Activated CD4-positive, alpha-beta T cell treated with anti-CD3 and anti-CD28 coated beads for 36 hours (primary cell): ENCODE measurements at regions of chr6 and their contacts with region 1.

Region 1: DNA sequence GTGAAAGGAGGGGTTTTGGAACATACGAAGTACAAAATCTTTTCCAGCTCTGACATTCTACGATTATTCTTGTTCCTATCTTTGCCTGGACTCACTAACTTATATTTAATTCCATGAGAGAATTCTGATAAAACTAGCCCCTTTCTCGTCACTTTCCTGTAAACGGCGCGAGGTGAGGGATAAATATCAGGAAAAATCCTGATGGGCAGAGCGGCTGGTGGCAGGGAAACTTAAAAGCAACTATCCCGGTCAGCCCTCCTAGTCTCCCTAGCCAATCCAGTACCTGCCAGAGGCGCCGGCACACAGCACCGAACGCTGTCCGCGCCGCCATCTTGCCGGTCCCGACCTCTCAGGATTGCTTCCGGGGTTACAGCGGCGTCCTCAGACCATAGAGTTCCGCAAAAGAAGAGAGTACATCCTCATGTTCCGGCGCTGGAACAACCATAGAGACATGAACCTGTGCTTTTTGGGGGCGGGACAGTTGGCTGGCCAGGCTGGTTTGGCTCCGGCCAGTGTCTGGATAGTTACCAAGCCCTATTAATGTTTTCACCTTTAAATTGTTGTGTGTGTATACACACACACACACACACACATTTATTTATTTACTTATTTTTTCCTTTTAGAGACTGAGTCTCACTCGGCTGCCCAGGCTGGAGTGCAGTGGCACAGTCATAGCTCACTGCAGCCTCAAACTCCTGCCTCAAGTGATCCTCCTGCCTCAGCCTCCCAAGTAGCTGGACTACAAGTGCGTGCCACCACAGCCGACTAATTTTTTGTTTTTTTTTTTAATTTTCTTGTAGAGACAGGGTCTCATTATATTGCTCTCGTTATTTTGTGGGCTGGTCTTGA is at the start of gene MRPS10:
- DNase-seq: peak; percentile 95
- ATAC-seq: peak; percentile 99
- H3K4me3 Mint-ChIP-seq: peak within 1 kb of the TSS; percentile 100
- H3K27ac Mint-ChIP-seq: peak within 1 kb of the TSS; percentile 95
- H3K4me1 Mint-ChIP-seq: peaks cover 32% of the 10 kb centered on the region
- H3K27me3 Mint-ChIP-seq: no peaks in the 10 kb centered on the region
- total RNA-seq, gene MRPS10: 35.2 to 36.2 TPM

Region 2: DNA sequence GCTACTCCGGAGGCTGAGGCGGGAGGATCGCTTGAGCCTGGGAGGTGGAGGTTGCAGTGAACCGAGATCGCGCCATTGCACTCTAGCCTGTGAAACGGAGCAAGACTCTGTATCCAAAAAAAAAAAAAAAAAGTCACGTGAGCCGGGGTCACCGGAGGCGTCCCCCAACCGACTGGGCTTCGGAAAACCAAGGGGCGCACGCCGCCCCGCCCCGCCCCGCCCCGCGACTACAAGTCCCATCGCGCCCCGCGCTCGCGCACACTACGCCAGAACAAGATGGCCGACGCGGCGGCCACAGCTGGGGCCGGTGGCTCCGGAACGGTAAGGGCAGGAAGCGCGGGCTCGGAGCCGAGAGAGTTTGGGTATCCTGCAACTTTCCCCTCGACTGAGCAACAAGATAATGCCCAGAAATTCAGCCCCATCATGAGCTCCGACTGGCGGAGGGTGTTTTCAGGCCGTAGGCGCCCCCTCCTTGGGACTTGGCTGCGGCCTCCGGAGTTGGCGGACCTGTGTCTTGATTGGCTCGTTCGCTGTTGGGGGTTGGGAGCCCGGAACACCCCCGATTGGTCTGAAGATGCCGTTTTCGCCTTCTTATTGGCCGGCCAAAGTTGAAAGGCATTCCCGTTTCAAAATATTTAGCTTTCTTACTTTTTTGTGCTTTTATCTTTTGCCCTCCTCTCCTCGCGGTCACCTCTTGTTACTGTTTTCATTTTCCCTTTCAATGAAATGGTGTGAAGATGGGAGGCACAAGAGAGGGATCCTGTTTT is 167.3 kb before region 1 on chr6 and contains the start of gene TAF8:
- CTCF ChIA-PET with region 1: interaction called, 6 read pairs
- POLR2A ChIA-PET with region 1: no interaction called
- intact Hi-C with region 1: loop called in 1 of 2 experiments (anchors 1 kb)
- DNase-seq: peak; percentile 94
- ATAC-seq: peak; percentile 76
- H3K4me3 Mint-ChIP-seq: peak within 1 kb of the TSS; percentile 88
- H3K27ac Mint-ChIP-seq: peak within 1 kb of the TSS; percentile 96
- H3K4me1 Mint-ChIP-seq: peaks cover 64% of the 10 kb centered on the region
- H3K27me3 Mint-ChIP-seq: no peaks in the 10 kb centered on the region
- total RNA-seq, gene TAF8: 52.3 to 53.1 TPM

Region 3: GRCh38 chr6:42230345-42231321 is 12.9 kb after region 1 on chr6:
- CTCF ChIA-PET with region 1: interaction called, 24 read pairs
- POLR2A ChIA-PET with region 1: no interaction called
- intact Hi-C with region 1: no loop called
- DNase-seq: no peak
- ATAC-seq: no peak
- H3K4me3 Mint-ChIP-seq: no peak overlapping the region
- H3K27ac Mint-ChIP-seq: peak overlapping the region; percentile 56
- H3K4me1 Mint-ChIP-seq: peaks cover 2% of the 10 kb centered on the region
- H3K27me3 Mint-ChIP-seq: no peaks in the 10 kb centered on the region

Region 4: DNA sequence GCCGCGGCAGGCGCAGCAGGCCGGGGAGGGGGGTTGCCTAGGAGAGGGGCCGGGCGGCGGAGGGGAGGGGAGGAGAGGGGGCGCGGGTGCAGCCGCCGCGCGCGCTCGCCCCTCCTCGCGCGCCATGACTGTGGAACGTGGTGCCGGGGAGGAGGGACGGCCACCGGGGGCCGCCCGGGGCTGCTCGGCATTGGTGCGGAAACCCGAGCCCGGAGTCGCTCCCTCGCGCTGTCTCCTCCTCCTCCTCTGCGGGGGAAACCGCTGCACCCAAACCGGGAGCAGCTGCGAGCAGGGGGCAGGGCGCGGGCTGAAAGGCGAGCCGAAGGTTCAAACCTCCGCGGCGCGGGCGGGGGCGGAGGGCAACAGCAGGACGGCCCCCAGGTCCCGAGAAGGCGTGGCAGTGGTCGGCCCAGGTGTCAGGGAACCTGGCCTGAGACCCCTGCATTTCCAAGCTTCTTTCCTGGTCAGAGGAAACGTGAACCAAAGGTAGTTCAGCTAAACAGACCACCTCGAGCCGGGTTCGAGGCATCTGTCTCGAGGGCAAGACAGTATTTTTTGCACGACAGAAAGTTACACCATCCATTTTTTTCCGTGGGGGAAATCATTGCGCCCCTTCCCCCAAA is 235.4 kb after region 1 on chr6:
- CTCF ChIA-PET with region 1: interaction called, 4 read pairs
- POLR2A ChIA-PET with region 1: no interaction called
- intact Hi-C with region 1: loop called (anchors 2 to 5 kb)
- DNase-seq: peak; percentile 87
- ATAC-seq: peak; percentile 76
- H3K4me3 Mint-ChIP-seq: peak overlapping the region; percentile 83
- H3K27ac Mint-ChIP-seq: no peak overlapping the region
- H3K4me1 Mint-ChIP-seq: peaks cover 34% of the 10 kb centered on the region
- H3K27me3 Mint-ChIP-seq: peaks cover 5% of the 10 kb centered on the region

Region 5: DNA sequence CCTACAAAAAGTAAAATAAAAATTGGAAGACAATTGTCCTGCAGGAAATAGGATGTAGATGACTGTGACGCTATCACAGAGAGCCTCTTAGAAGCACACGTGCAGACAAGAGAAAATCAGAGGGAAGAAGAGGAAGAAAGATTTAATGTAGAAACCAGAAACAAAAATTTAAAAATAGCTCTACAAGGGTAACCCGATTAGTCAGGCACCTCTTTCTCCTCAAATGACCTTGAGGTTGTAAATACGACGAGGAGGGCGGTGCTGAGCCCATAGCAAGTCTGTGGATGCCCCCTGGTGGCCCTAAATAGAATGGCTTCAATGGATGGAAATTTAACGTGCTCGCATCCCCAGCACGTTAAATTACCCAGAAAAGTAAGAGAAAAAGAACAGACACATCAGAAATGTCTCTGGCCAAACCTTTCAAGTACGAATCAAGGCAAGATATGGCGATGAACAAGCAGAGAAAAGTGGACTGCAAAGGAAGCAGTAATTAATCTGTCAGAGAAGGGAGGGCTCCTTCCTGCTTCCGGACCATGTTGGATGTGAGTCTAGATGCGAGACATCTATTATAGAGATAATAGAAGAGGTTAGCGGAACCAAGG is 508.8 kb after region 1 on chr6:
- CTCF ChIA-PET with region 1: no interaction called
- POLR2A ChIA-PET with region 1: no interaction called
- intact Hi-C with region 1: loop called in 1 of 2 experiments (anchors 2 kb)
- DNase-seq: peak; percentile 85
- ATAC-seq: peak; percentile 98
- H3K4me3 Mint-ChIP-seq: peak overlapping the region; percentile 69
- H3K27ac Mint-ChIP-seq: peak overlapping the region; percentile 95
- H3K4me1 Mint-ChIP-seq: peaks cover 19% of the 10 kb centered on the region
- H3K27me3 Mint-ChIP-seq: no peaks in the 10 kb centered on the region